CD14-positive monocyte (primary cell): ENCODE measurements at regions of chr16 and their contacts with region 1.

Region 1: GRCh38 chr16:67993189-67994039 is 5.9 kb downstream of the DPEP2 start:
- DNase-seq: peak; percentile 77 to 90 (median 88)
- H3K4me3 ChIP-seq: peak overlapping the region; percentile 2 to 50 (median 42)
- H3K4me3 Mint-ChIP-seq: peak overlapping the region; percentile 78 to 92
- H3K27ac ChIP-seq: peak overlapping the region; percentile 85 to 97
- H3K27ac Mint-ChIP-seq: peak overlapping the region; percentile 98 to 100 (median 100)
- H3K4me1 ChIP-seq: peaks cover 63 to 70% of the 10 kb centered on the region in 2 donors
- H3K4me1 Mint-ChIP-seq: peaks cover 56% of the 10 kb centered on the region
- H3K27me3 ChIP-seq: no peaks in the 10 kb centered on the region
- H3K27me3 Mint-ChIP-seq: no peaks in the 10 kb centered on the region
- CTCF ChIP-seq: peak; percentile 98

Region 2: GRCh38 chr16:68005786-68006286 is 12.4 kb after region 1 on chr16:
- intact Hi-C with region 1: loop called in 1 of 2 experiments (anchors 2 kb)
- DNase-seq: peak; percentile 88 to 94 (median 92)
- H3K4me3 ChIP-seq: peak overlapping the region in 1 of 3 experiments; percentile 29
- H3K4me3 Mint-ChIP-seq: peak overlapping the region; percentile 39 to 67
- H3K27ac ChIP-seq: peak overlapping the region; percentile 93 to 97
- H3K27ac Mint-ChIP-seq: peak overlapping the region; percentile 99 to 100 (median 99)
- H3K4me1 ChIP-seq: peaks cover 53 to 57% of the 10 kb centered on the region in 2 donors
- H3K4me1 Mint-ChIP-seq: peaks cover 47% of the 10 kb centered on the region
- H3K27me3 ChIP-seq: no peaks in the 10 kb centered on the region
- H3K27me3 Mint-ChIP-seq: peaks cover 0 to 2% (median 0%) of the 10 kb centered on the region in 3 donors
- CTCF ChIP-seq: no peak

Region 3: GRCh38 chr16:68022704-68023522 is 29.5 kb after region 1 on chr16 and contains the starts of genes DDX28 and DUS2:
- intact Hi-C with region 1: loop called in 1 of 2 experiments (anchors 1 kb)
- DNase-seq: peak; percentile 92 to 96 (median 95)
- H3K4me3 ChIP-seq: peak within 1 kb of the TSS; percentile 83 to 96 (median 83)
- H3K4me3 Mint-ChIP-seq: peak within 1 kb of the TSS; percentile 94 to 100
- H3K27ac ChIP-seq: peak within 1 kb of the TSS; percentile 80 to 95
- H3K27ac Mint-ChIP-seq: peak within 1 kb of the TSS; percentile 92 to 99 (median 96)
- H3K4me1 ChIP-seq: peaks cover 25 to 30% of the 10 kb centered on the region in 2 donors
- H3K4me1 Mint-ChIP-seq: peaks cover 25% of the 10 kb centered on the region
- H3K27me3 ChIP-seq: no peaks in the 10 kb centered on the region
- H3K27me3 Mint-ChIP-seq: peaks cover 0 to 2% (median 0%) of the 10 kb centered on the region in 3 donors
- CTCF ChIP-seq: no peak
- polyA plus RNA-seq, gene DDX28: 14.7 to 42.9 (median 27.7) TPM
- polyA plus RNA-seq, gene DUS2: 18.4 to 40.7 (median 33.2) TPM

Region 4: GRCh38 chr16:68040507-68041288 is 47.3 kb after region 1 on chr16:
- intact Hi-C with region 1: loop called (anchors 1 kb)
- DNase-seq: peak; percentile 69 to 79 (median 77)
- H3K4me3 ChIP-seq: peak overlapping the region in 1 of 3 experiments; percentile 62
- H3K4me3 Mint-ChIP-seq: peak overlapping the region; percentile 51 to 58
- H3K27ac ChIP-seq: peak overlapping the region; percentile 80
- H3K27ac Mint-ChIP-seq: peak overlapping the region; percentile 74 to 96 (median 90)
- H3K4me1 ChIP-seq: peaks cover 72 to 82% of the 10 kb centered on the region in 2 donors
- H3K4me1 Mint-ChIP-seq: peaks cover 74% of the 10 kb centered on the region
- H3K27me3 ChIP-seq: no peaks in the 10 kb centered on the region
- H3K27me3 Mint-ChIP-seq: peaks cover 0 to 2% (median 1%) of the 10 kb centered on the region in 3 donors
- CTCF ChIP-seq: peak; percentile 88

Region 5: GRCh38 chr16:68155425-68155824 is 162.0 kb after region 1 on chr16:
- intact Hi-C with region 1: no loop called
- DNase-seq: no peak
- H3K4me3 ChIP-seq: no peak overlapping the region
- H3K4me3 Mint-ChIP-seq: no peak overlapping the region
- H3K27ac ChIP-seq: no peak overlapping the region
- H3K27ac Mint-ChIP-seq: no peak overlapping the region
- H3K4me1 ChIP-seq: no peaks in the 10 kb centered on the region
- H3K4me1 Mint-ChIP-seq: no peaks in the 10 kb centered on the region
- H3K27me3 ChIP-seq: no peaks in the 10 kb centered on the region
- H3K27me3 Mint-ChIP-seq: peaks cover 0 to 2% (median 0%) of the 10 kb centered on the region in 3 donors
- CTCF ChIP-seq: no peak